MCF 10A (cell line): ENCODE measurements at regions of chr10 and their contacts with region 1.

Region 1: DNA sequence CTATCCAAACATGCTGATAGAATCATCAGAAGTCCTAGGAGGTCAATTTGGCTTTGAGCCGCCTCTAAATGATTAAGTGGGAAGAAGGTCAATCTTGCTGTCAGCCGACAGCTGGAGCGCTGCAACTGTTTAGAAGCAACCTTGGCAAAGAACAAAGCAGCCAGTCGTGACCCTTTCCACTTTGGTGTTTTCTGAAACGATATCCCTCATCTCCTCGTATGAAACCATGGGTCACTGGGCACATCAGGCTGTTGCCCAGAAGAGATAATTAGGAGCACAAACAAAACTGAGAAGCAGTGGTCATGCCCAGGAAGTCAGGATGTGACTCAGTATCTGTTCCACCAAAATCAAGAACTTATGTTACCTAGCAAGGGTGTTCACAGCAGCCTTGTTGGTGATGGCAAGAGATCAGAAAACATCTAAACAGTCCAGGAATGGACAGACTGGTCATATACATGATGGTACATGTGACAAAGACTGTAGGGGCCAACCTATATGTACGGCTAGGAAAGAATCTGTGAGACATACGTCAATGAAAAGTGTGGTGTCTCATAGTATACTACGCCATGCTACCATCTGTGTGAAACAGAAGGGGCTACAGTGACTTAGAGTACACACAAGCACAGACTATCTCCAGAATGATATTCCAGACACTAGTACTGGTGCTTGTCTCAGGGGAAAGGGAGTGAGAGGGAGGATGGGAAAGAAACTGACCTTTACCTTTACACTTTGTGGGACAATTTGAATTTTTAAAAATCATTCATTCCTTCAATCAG is 22.4 kb downstream of the STN1 start:
- DNase-seq: peak; percentile 60
- H3K4me3 Mint-ChIP-seq: no peak overlapping the region
- H3K27ac Mint-ChIP-seq: peak overlapping the region; percentile 91
- H3K4me1 Mint-ChIP-seq: peaks cover 39% of the 10 kb centered on the region
- H3K27me3 Mint-ChIP-seq: no peaks in the 10 kb centered on the region
- CTCF ChIP-seq: no peak

Region 2: GRCh38 chr10:103881416-103882284 is 13.9 kb before region 1 on chr10:
- CTCF ChIA-PET with region 1: interaction called, 7 read pairs
- POLR2A ChIA-PET with region 1: interaction called, 18 read pairs
- intact Hi-C with region 1: no loop called
- DNase-seq: peak; percentile 86
- H3K4me3 Mint-ChIP-seq: no peak overlapping the region
- H3K27ac Mint-ChIP-seq: peak overlapping the region; percentile 68
- H3K4me1 Mint-ChIP-seq: peaks cover 38% of the 10 kb centered on the region
- H3K27me3 Mint-ChIP-seq: no peaks in the 10 kb centered on the region
- CTCF ChIP-seq: no peak

Region 3: GRCh38 chr10:104099274-104099673 is 203.7 kb after region 1 on chr10:
- CTCF ChIA-PET with region 1: no interaction called
- POLR2A ChIA-PET with region 1: no interaction called
- intact Hi-C with region 1: no loop called
- DNase-seq: no peak
- H3K4me3 Mint-ChIP-seq: no peak overlapping the region
- H3K27ac Mint-ChIP-seq: no peak overlapping the region
- H3K4me1 Mint-ChIP-seq: peaks cover 6% of the 10 kb centered on the region
- H3K27me3 Mint-ChIP-seq: no peaks in the 10 kb centered on the region
- CTCF ChIP-seq: no peak